ENCODE measurements at regions of chr20 and their contacts with region 1.

Region 1: GRCh38 chr20:58481481-58482021 is 33.6 kb downstream of the APCDD1L start:
- DNase-seq: peak; percentile 24 to 70 (median 49)
- ATAC-seq: peak; percentile 63
- H3K4me3 ChIP-seq: no peak overlapping the region
- H3K4me3 Mint-ChIP-seq: no peak overlapping the region
- H3K27ac ChIP-seq: no peak overlapping the region
- H3K27ac Mint-ChIP-seq: no peak overlapping the region
- H3K4me1 ChIP-seq: no peaks in the 10 kb centered on the region
- H3K4me1 Mint-ChIP-seq: peaks cover 2% of the 10 kb centered on the region
- H3K27me3 ChIP-seq: no peaks in the 10 kb centered on the region
- H3K27me3 Mint-ChIP-seq: peaks cover 13% of the 10 kb centered on the region
- CTCF ChIP-seq: no peak

Region 2: DNA sequence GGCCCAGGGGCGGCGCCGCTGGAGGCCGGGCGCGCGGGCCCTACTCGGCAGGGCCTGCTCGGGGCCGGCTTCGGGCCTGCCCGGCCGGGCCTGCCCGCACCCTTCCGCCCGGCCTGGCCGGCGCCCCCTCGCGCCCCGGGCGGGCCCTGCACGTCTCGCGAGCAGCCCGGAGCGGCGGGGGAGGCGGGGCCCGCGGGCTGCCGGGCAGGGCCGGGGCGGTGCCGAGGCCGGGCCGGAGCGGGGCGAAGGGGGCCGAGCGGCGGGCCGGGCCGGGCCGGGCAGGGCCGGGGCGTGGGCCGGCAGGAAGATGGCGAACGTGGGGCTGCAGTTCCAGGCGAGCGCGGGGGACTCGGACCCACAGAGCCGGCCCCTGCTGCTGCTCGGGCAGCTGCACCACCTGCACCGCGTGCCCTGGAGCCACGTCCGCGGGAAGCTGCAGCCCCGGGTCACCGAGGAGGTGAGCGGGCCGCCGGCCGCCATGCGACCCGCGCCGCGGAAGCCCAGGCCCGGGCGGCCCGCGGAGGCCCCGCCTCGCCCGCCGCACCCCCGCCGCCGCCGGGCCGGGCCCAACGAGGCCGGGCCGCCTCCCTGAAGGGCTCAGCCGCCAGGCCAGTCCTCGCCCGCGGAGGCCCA is 211.2 kb after region 1 on chr20 and contains the start of gene NPEPL1:
- CTCF ChIA-PET with region 1: interaction called, 4 read pairs
- POLR2A ChIA-PET with region 1: no interaction called
- intact Hi-C with region 1: loop called (anchors 5 to 10 kb)
- DNase-seq: peak in 8 of 9 experiments; percentile 49 to 85 (median 63)
- ATAC-seq: peak; percentile 93
- H3K4me3 ChIP-seq: peak within 1 kb of the TSS; percentile 11 to 40
- H3K4me3 Mint-ChIP-seq: peak within 1 kb of the TSS; percentile 65
- H3K27ac ChIP-seq: peak within 1 kb of the TSS; percentile 23 to 73
- H3K27ac Mint-ChIP-seq: peak within 1 kb of the TSS; percentile 89
- H3K4me1 ChIP-seq: peaks cover 20% of the 10 kb centered on the region
- H3K4me1 Mint-ChIP-seq: peaks cover 12% of the 10 kb centered on the region
- H3K27me3 ChIP-seq: no peaks in the 10 kb centered on the region
- H3K27me3 Mint-ChIP-seq: no peaks in the 10 kb centered on the region
- CTCF ChIP-seq: no peak
- total RNA-seq, gene NPEPL1: 46.9 to 58.3 TPM

Region 3: GRCh38 chr20:58839474-58839874 is 357.9 kb after region 1 on chr20:
- CTCF ChIA-PET with region 1: interaction called, 13 read pairs
- POLR2A ChIA-PET with region 1: no interaction called
- intact Hi-C with region 1: loop called in 1 of 2 experiments (anchors 2 kb)
- DNase-seq: peak in 7 of 9 experiments; percentile 27 to 61 (median 46)
- ATAC-seq: peak; percentile 73
- H3K4me3 ChIP-seq: peak overlapping the region in 1 of 2 experiments; percentile 20
- H3K4me3 Mint-ChIP-seq: peak overlapping the region; percentile 57
- H3K27ac ChIP-seq: no peak overlapping the region
- H3K27ac Mint-ChIP-seq: no peak overlapping the region
- H3K4me1 ChIP-seq: no peaks in the 10 kb centered on the region
- H3K4me1 Mint-ChIP-seq: peaks cover 21% of the 10 kb centered on the region
- H3K27me3 ChIP-seq: peaks cover 3 to 8% of the 10 kb centered on the region in 2 experiments
- H3K27me3 Mint-ChIP-seq: peaks cover 23% of the 10 kb centered on the region
- CTCF ChIP-seq: peak; percentile 48

Region 4: GRCh38 chr20:58850693-58851174 is 369.2 kb after region 1 on chr20 and contains the start of gene GNAS-AS1:
- CTCF ChIA-PET with region 1: no interaction called
- POLR2A ChIA-PET with region 1: no interaction called
- intact Hi-C with region 1: loop called in 1 of 2 experiments (anchors 5 kb)
- DNase-seq: peak; percentile 61 to 87 (median 79)
- ATAC-seq: peak; percentile 91
- H3K4me3 ChIP-seq: peak within 1 kb of the TSS; percentile 48 to 55
- H3K4me3 Mint-ChIP-seq: peak within 1 kb of the TSS; percentile 91
- H3K27ac ChIP-seq: no peak within 1 kb of the TSS
- H3K27ac Mint-ChIP-seq: peak within 1 kb of the TSS; percentile 52
- H3K4me1 ChIP-seq: peaks cover 37% of the 10 kb centered on the region
- H3K4me1 Mint-ChIP-seq: peaks cover 32% of the 10 kb centered on the region
- H3K27me3 ChIP-seq: peaks cover 11 to 29% of the 10 kb centered on the region in 2 experiments
- H3K27me3 Mint-ChIP-seq: peaks cover 14% of the 10 kb centered on the region
- CTCF ChIP-seq: no peak
- total RNA-seq, gene GNAS-AS1: 0.28 TPM in 1 of 2 experiments, not detected in the other

Region 5: GRCh38 chr20:60242836-60243505 is 1761.4 kb after region 1 on chr20:
- CTCF ChIA-PET with region 1: no interaction called
- POLR2A ChIA-PET with region 1: no interaction called
- intact Hi-C with region 1: no loop called
- DNase-seq: no peak
- ATAC-seq: no peak
- H3K4me3 ChIP-seq: no peak overlapping the region
- H3K4me3 Mint-ChIP-seq: no peak overlapping the region
- H3K27ac ChIP-seq: no peak overlapping the region
- H3K27ac Mint-ChIP-seq: no peak overlapping the region
- H3K4me1 ChIP-seq: no peaks in the 10 kb centered on the region
- H3K4me1 Mint-ChIP-seq: no peaks in the 10 kb centered on the region
- H3K27me3 ChIP-seq: no peaks in the 10 kb centered on the region
- H3K27me3 Mint-ChIP-seq: peaks cover 7% of the 10 kb centered on the region
- CTCF ChIP-seq: no peak